Mammary epithelial cell (primary cell): ENCODE measurements at regions of chr21 and their contacts with region 1.

Region 1: DNA sequence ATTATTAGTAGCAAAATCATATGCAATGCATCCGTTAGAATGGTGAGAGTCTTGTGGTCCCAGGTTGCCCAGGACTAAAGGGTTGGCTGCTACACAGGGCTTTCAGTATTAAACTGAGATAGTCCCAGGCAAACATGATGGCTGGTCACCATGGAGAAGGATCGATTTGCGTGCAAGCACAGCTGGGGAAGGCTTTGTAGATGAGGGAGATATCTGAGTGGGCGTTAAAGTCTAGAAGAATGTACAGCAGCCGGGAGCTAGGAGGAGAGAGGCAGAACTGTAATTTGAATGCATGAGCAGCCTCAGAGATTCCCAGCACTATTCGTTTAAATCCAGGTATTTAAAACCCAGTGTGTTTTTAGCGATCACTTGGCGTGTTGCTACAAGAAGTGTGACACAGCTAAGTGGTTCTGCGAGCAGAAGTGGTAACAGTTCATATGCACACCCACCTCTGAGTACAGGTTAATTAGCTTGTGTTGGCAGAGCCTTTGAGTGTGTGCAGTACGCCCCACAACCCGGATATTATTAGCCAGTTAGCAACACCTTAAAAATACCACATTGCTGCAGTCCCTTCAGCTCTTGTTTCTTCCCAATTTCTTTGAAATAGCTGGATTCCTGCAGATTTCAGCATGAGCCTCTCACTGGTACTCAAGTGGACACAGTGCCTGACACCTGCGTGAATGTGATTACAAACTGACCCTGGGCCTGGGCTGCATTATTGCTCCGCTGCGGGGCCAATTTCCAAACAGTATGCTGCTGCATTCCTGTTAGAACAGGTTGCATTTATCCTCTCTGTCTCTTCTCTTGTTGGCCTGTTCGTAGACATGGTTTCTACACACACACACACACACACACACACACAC is 67.2 kb upstream of the SCAF4 start:
- DNase-seq: peak; percentile 48
- H3K4me3 ChIP-seq: no peak overlapping the region
- H3K27ac ChIP-seq: no peak overlapping the region
- H3K4me1 ChIP-seq: peaks cover 4% of the 10 kb centered on the region
- H3K27me3 ChIP-seq: no peaks in the 10 kb centered on the region
- CTCF ChIP-seq: no peak

Region 2: GRCh38 chr21:31766899-31767298 is 32.2 kb before region 1 on chr21:
- CTCF ChIA-PET with region 1: no interaction called
- dilution Hi-C with region 1: loop called (anchors 5 kb)
- in situ Hi-C with region 1: no loop called
- intact Hi-C with region 1: no loop called
- DNase-seq: no peak
- H3K4me3 ChIP-seq: no peak overlapping the region
- H3K27ac ChIP-seq: no peak overlapping the region
- H3K4me1 ChIP-seq: no peaks in the 10 kb centered on the region
- H3K27me3 ChIP-seq: no peaks in the 10 kb centered on the region
- CTCF ChIP-seq: no peak

Region 3: GRCh38 chr21:31846690-31847089 is 47.6 kb after region 1 on chr21:
- CTCF ChIA-PET with region 1: no interaction called
- dilution Hi-C with region 1: loop called (anchors 5 kb)
- in situ Hi-C with region 1: no loop called
- intact Hi-C with region 1: no loop called
- DNase-seq: no peak
- H3K4me3 ChIP-seq: no peak overlapping the region
- H3K27ac ChIP-seq: no peak overlapping the region
- H3K4me1 ChIP-seq: no peaks in the 10 kb centered on the region
- H3K27me3 ChIP-seq: no peaks in the 10 kb centered on the region
- CTCF ChIP-seq: no peak